Mammary epithelial cell (primary cell): ENCODE measurements at regions of chr2 and their contacts with region 1.

Region 1: DNA sequence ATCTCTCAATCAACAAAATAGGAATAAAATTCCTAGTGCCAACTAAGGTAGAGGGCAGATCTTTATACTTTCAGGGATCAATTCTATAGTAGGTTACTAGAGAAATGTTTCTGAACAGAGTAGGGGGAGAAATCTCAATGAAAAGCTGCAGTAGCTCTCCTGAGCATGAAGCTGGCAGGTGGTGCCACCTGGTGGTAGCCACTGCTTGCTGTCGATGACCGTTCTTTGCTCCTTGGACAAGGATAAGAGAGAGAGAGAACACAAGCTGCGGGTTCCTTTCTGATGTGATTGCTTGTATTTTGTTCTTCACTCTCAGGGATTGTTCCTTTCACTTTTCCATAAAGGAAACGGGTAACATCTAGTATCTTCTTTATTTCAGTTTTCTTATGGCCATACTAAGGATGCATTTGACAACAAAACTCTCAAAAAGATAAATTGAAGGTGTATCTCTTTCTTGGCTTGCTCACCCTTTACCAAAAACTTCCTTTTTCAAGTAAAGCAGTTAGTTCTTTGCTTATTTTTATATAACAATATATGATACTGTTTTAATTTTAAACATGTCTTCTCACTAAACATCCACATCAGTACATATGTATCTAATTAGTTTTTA is 18.6 kb upstream of the MRPL19 start:
- DNase-seq: peak; percentile 59
- H3K4me3 ChIP-seq: no peak overlapping the region
- H3K27ac ChIP-seq: no peak overlapping the region
- H3K4me1 ChIP-seq: peaks cover 7% of the 10 kb centered on the region
- H3K27me3 ChIP-seq: no peaks in the 10 kb centered on the region
- CTCF ChIP-seq: peak; percentile 97 to 98

Region 2: GRCh38 chr2:75157430-75157829 is 470.6 kb before region 1 on chr2:
- CTCF ChIA-PET with region 1: no interaction called
- dilution Hi-C with region 1: no loop called
- in situ Hi-C with region 1: no loop called
- intact Hi-C with region 1: loop called (anchors 1 kb)
- DNase-seq: no peak
- H3K4me3 ChIP-seq: no peak overlapping the region
- H3K27ac ChIP-seq: no peak overlapping the region
- H3K4me1 ChIP-seq: no peaks in the 10 kb centered on the region
- H3K27me3 ChIP-seq: peaks cover 2% of the 10 kb centered on the region
- CTCF ChIP-seq: peak; percentile 12 to 49

Region 3: GRCh38 chr2:75466708-75467311 is 161.2 kb before region 1 on chr2:
- CTCF ChIA-PET with region 1: interaction called, 6 read pairs
- dilution Hi-C with region 1: no loop called
- in situ Hi-C with region 1: no loop called
- intact Hi-C with region 1: loop called (anchors 1 kb)
- DNase-seq: peak; percentile 23
- H3K4me3 ChIP-seq: no peak overlapping the region
- H3K27ac ChIP-seq: no peak overlapping the region
- H3K4me1 ChIP-seq: no peaks in the 10 kb centered on the region
- H3K27me3 ChIP-seq: no peaks in the 10 kb centered on the region
- CTCF ChIP-seq: peak; percentile 59 to 72

Region 4: GRCh38 chr2:75570948-75571729 is 56.9 kb before region 1 on chr2:
- CTCF ChIA-PET with region 1: no interaction called
- dilution Hi-C with region 1: no loop called
- in situ Hi-C with region 1: no loop called
- intact Hi-C with region 1: loop called (anchors 1 kb)
- DNase-seq: no peak
- H3K4me3 ChIP-seq: no peak overlapping the region
- H3K27ac ChIP-seq: no peak overlapping the region
- H3K4me1 ChIP-seq: peaks cover 49% of the 10 kb centered on the region
- H3K27me3 ChIP-seq: no peaks in the 10 kb centered on the region
- CTCF ChIP-seq: no peak

Region 5: GRCh38 chr2:77336013-77336412 is 1708.0 kb after region 1 on chr2:
- CTCF ChIA-PET with region 1: no interaction called
- dilution Hi-C with region 1: no loop called
- in situ Hi-C with region 1: no loop called
- intact Hi-C with region 1: no loop called
- DNase-seq: no peak
- H3K4me3 ChIP-seq: no peak overlapping the region
- H3K27ac ChIP-seq: no peak overlapping the region
- H3K4me1 ChIP-seq: no peaks in the 10 kb centered on the region
- H3K27me3 ChIP-seq: no peaks in the 10 kb centered on the region
- CTCF ChIP-seq: no peak